ENCODE measurements at regions of chr1 and their contacts with region 1.

Region 1: DNA sequence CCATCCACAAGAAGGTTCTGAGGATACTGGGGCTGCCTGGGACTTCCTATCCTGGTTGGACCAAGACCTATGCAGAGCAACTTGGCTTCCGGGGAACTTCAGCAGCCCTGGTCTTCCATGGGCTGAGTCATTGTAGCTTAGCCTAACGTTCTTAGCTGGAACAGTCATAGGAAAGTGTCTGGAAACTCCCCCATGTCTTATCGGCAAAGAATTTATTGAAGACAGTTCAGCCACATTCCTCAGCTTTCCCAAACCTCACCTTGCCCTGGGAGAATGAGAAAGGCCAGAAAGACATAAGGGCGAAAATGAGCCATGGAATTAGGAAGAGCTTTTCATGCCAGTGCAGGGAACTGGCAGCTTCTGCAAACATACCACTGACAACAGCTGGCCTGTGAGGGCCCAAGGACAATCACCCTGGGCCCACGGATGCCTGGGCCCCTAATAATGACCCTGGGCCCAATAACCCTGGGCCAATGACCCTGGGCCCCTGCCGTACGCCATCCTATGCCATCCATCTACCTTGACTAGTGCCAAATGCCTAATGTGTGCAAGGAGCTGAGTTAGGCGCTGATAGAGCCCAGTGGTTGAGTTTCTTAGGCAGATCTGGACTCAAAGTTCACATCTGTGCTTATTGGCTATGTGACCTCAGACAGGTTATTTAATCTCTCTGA is 114.4 kb upstream of the GADD45A start:
- DNase-seq: no peak
- ATAC-seq: no peak
- H3K4me3 ChIP-seq: no peak overlapping the region
- H3K4me3 Mint-ChIP-seq: no peak overlapping the region
- H3K27ac ChIP-seq: no peak overlapping the region
- H3K27ac Mint-ChIP-seq: no peak overlapping the region
- H3K4me1 ChIP-seq: no peaks in the 10 kb centered on the region
- H3K4me1 Mint-ChIP-seq: no peaks in the 10 kb centered on the region
- H3K27me3 ChIP-seq: peaks cover 0 to 6% of the 10 kb centered on the region in 2 experiments
- H3K27me3 Mint-ChIP-seq: no peaks in the 10 kb centered on the region

Region 2: GRCh38 chr1:67760030-67760821 is 189.6 kb after region 1 on chr1:
- CTCF ChIA-PET with region 1: interaction called, 6 to 19 read pairs
- POLR2A ChIA-PET with region 1: no interaction called
- DNase-seq: peak in 31 of 35 experiments; percentile 14 to 76 (median 47)
- ATAC-seq: peak; percentile 51 to 59 (median 54)
- H3K4me3 ChIP-seq: no peak overlapping the region
- H3K4me3 Mint-ChIP-seq: no peak overlapping the region
- H3K27ac ChIP-seq: no peak overlapping the region
- H3K27ac Mint-ChIP-seq: no peak overlapping the region
- H3K4me1 ChIP-seq: no peaks in the 10 kb centered on the region
- H3K4me1 Mint-ChIP-seq: no peaks in the 10 kb centered on the region
- H3K27me3 ChIP-seq: peaks cover 0 to 2% of the 10 kb centered on the region in 2 experiments
- H3K27me3 Mint-ChIP-seq: peaks cover 20 to 22% of the 10 kb centered on the region in 2 donors